ENCODE measurements at regions of chr3 and their contacts with region 1.

Region 1: GRCh38 chr3:114411811-114412803 is 118.3 kb downstream of the TIGIT start:
- DNase-seq: no peak
- H3K4me3 ChIP-seq: no peak overlapping the region
- CTCF ChIP-seq: no peak

Region 2: DNA sequence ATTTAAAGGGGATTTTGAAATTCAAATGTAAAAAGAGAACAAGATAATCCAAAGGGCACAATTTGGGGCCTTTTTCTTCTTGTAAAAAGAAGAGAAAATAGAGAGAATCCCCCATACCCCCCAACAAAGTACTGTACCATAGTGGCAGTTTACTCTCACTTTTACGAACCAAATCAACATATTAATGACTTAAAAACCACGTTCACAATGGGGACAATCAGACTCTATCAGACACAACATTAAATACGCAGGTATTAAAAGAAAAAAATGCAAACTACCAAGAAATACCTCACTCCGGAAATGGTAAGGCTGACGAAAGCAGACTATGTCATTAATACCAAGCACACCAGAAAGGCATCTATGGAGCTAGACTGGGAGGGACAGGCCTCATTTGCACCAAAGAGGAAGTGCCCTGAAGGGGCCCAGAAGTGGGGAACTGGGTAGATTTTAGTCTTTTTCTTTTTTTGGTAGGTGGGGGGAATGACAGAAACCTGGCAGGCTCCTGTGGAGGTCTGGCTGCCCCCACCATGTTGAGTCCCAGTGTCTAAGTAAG is 16.0 kb after region 1 on chr3:
- CTCF ChIA-PET with region 1: interaction called, 74 read pairs
- POLR2A ChIA-PET with region 1: no interaction called
- DNase-seq: no peak
- H3K4me3 ChIP-seq: no peak overlapping the region
- CTCF ChIP-seq: no peak

Measured in AG04449 (cell line).